Right cardiac atrium (tissue), 5 donors: ENCODE measurements at regions of chr11 and their contacts with region 1.

Region 1: DNA sequence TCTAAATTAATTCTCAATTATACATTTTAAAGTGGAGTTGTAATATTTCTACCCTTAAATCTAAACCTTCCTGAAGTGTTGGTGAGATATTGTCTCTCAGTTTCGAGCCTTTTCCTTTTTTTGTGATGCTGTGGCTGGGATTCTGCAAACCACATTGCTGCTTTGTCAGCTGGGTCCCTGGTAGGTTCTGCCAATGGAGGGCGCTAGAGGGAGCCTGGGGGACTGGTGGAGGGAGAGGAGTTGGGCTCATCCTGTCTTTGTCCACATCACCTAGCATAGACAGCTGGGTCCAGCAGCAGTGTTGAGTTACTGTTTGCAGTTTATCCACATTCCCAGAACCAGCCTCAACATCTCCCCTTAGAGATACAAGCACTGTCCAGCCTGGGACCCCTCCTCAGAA is 41.0 kb downstream of the TRAF6 start:
- DNase-seq: no peak
- ATAC-seq: no peak
- H3K4me3 ChIP-seq: no peak overlapping the region
- H3K27ac ChIP-seq: no peak overlapping the region
- H3K4me1 ChIP-seq: no peaks in the 10 kb centered on the region
- H3K27me3 ChIP-seq: no peaks in the 10 kb centered on the region

Region 2: DNA sequence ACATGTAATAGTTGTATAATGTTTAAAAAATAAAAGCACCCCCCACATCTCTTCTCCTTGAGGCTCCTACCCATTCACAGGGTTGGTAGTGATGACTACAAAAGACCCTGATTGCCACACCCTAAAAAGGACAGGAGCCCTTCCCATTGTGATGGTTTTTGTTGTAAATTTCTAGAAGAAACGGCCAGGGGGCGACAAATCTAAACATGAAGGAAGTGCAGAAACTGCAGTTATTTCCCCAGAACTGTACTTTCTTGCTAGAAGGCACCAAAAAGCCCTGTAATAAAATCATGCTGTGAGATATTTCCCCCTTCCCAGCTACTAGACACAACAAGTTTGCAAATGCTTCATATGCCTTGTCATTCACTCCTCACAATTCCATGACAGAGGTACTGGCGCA is 162.2 kb before region 1 on chr11:
- intact Hi-C with region 1: loop called in 1 of 4 experiments (anchors 10 kb)
- DNase-seq: no peak
- ATAC-seq: no peak
- H3K4me3 ChIP-seq: no peak overlapping the region
- H3K27ac ChIP-seq: no peak overlapping the region
- H3K4me1 ChIP-seq: no peaks in the 10 kb centered on the region
- H3K27me3 ChIP-seq: no peaks in the 10 kb centered on the region